ENCODE measurements at regions of chr11 and their contacts with region 1.

Region 1: DNA sequence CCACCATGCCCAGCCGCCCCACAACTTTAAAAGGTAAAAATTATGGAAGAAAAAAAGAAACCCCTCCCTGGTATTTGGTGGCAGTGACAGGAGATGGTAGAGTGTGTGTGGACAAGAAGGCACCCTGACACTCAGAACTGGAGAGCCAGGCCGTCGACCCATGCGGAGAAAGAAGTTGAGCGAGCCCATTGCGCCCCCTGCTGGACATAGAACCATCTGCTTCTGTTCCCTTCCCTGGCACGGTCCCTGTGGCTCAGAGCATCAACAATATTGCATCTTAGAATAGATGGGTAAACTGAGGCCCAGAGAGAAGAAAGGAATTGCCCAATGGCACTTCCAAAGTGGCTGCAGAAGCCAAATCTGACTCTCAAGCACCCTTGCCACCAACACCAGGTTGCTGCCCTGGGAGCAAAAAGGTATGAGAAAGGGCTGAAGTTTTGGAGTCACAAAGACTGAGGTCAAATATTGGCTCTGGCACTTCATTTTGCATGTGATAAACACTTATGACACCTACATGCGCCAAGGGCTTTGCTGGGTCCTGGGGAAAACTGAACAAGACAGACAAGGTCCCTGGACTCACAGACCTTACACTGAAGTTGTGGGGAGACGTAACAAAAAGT is 8.6 kb downstream of the MRPL11 start:
- DNase-seq: peak; percentile 72 to 87 (median 86)
- ATAC-seq: peak; percentile 72 to 81
- H3K4me3 ChIP-seq: no peak overlapping the region
- H3K27ac ChIP-seq: no peak overlapping the region
- H3K4me1 ChIP-seq: no peaks in the 10 kb centered on the region
- H3K27me3 ChIP-seq: no peaks in the 10 kb centered on the region

Region 2: GRCh38 chr11:66371627-66372415 is 58.3 kb before region 1 on chr11 and contains the start of gene SLC29A2:
- intact Hi-C with region 1: no loop called
- DNase-seq: peak; percentile 65 to 90 (median 87)
- ATAC-seq: peak; percentile 83 to 85
- H3K4me3 ChIP-seq: peak within 1 kb of the TSS; percentile 59
- H3K27ac ChIP-seq: peak within 1 kb of the TSS; percentile 87
- H3K4me1 ChIP-seq: peaks cover 6% of the 10 kb centered on the region
- H3K27me3 ChIP-seq: no peaks in the 10 kb centered on the region
- total RNA-seq, gene SLC29A2: 18.7 to 33.2 (median 30.0) TPM

Region 3: GRCh38 chr11:66408488-66409214 is 21.4 kb before region 1 on chr11:
- intact Hi-C with region 1: loop called in 2 of 4 experiments (anchors 2 kb)
- DNase-seq: peak; percentile 93 to 96 (median 95)
- ATAC-seq: peak; percentile 93 to 95
- H3K4me3 ChIP-seq: peak overlapping the region; percentile 34
- H3K27ac ChIP-seq: no peak overlapping the region
- H3K4me1 ChIP-seq: no peaks in the 10 kb centered on the region
- H3K27me3 ChIP-seq: no peaks in the 10 kb centered on the region

Region 4: DNA sequence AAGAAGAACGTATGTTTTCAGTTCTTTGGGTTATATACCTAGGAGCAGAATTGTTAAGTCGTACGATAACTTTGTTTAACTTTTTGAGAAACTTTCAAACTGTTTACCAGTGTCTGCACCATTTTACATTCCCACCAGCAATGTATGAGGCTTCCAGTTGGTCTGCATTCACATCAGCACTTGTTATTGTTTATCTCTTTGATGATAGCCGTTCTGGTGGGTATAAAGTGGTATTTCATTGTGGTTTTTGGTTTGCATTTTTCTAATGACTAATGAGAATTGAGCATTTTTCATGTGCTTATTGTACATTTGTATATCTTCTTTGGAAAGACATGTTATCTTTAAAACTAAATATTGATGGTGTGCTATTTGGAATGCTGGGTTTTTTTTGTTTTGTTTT is 748.8 kb after region 1 on chr11:
- intact Hi-C with region 1: no loop called
- DNase-seq: no peak
- ATAC-seq: no peak
- H3K4me3 ChIP-seq: no peak overlapping the region
- H3K27ac ChIP-seq: no peak overlapping the region
- H3K4me1 ChIP-seq: peaks cover 2% of the 10 kb centered on the region
- H3K27me3 ChIP-seq: no peaks in the 10 kb centered on the region